MCF 10A (cell line): ENCODE measurements at regions of chr5 and their contacts with region 1.

Region 1: GRCh38 chr5:136814619-136815378 is 449.5 kb upstream of the TRPC7 start:
- DNase-seq: no peak
- H3K4me3 Mint-ChIP-seq: no peak overlapping the region
- H3K27ac Mint-ChIP-seq: no peak overlapping the region
- H3K4me1 Mint-ChIP-seq: peaks cover 5% of the 10 kb centered on the region
- H3K27me3 Mint-ChIP-seq: peaks cover 12% of the 10 kb centered on the region
- CTCF ChIP-seq: no peak

Region 2: DNA sequence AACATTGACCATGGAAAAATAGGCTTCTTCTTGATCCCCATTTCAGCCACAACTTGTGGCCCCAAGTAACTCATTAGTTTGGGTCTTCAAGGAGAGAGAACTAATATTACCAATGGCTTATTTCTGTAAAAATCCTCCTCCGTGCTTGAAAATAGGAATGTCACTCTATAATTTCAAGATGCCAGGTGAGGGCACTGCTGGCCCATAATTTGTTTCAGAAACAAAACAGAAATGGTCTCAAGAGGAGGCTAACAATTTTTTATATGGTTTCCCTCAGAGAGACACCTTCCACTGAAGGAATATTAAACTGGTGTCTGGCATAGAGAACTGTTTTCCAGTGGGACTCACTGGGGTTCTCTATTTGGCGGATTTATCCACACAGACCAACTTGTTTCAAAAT is 12.4 kb before region 1 on chr5:
- CTCF ChIA-PET with region 1: interaction called, 16 read pairs
- POLR2A ChIA-PET with region 1: interaction called, 3 read pairs
- intact Hi-C with region 1: no loop called
- DNase-seq: peak; percentile 34
- H3K4me3 Mint-ChIP-seq: no peak overlapping the region
- H3K27ac Mint-ChIP-seq: no peak overlapping the region
- H3K4me1 Mint-ChIP-seq: no peaks in the 10 kb centered on the region
- H3K27me3 Mint-ChIP-seq: peaks cover 43% of the 10 kb centered on the region
- CTCF ChIP-seq: peak; percentile 49

Region 3: GRCh38 chr5:136957428-136957827 is 142.6 kb after region 1 on chr5:
- CTCF ChIA-PET with region 1: no interaction called
- POLR2A ChIA-PET with region 1: no interaction called
- intact Hi-C with region 1: no loop called
- DNase-seq: peak; percentile 44
- H3K4me3 Mint-ChIP-seq: no peak overlapping the region
- H3K27ac Mint-ChIP-seq: no peak overlapping the region
- H3K4me1 Mint-ChIP-seq: no peaks in the 10 kb centered on the region
- H3K27me3 Mint-ChIP-seq: no peaks in the 10 kb centered on the region
- CTCF ChIP-seq: no peak